ENCODE measurements at regions of chr1 and their contacts with region 1.

Region 1: DNA sequence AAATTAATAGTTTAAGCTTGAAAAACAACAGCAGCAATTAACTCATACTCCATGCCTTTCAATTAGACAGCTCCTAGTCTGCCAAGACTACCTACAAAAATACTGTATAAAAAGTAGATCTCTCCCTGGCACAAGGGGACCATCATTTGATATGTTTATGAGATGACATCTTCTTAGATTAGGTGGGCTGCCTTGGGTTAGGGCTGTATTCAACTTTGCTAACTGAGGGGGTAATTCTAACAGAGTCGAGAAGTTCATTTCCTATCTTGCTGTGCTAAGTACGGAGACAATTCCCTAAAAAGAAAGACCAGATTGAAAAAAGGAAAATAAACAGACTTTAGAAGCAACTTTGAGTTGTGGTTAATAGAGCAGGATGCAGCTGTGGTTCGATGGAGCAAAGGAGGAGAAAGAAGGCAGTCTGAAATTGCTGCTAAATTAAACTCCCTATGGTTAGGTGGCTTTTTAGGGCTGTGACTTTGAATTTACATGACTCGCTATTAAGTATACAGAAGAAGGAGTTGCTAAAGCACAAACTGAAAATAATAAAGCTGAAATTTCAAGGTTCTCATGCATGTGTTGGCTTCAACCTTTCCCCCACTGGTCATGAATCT is 75.4 kb downstream of the CDC7 start:
- DNase-seq: peak; percentile 68
- ATAC-seq: no peak; the same call in 1 of the 2 replicates
- H3K4me3 ChIP-seq: no peak overlapping the region
- H3K27ac ChIP-seq: peak overlapping the region; percentile 73; the same call in 1 of the 2 replicates
- H3K4me1 ChIP-seq: peaks cover 22% of the 10 kb centered on the region
- H3K27me3 ChIP-seq: no peaks in the 10 kb centered on the region
- CTCF ChIP-seq: no peak
- POLR2A ChIP-seq: no peak
- RAD21 ChIP-seq: no peak

Region 2: GRCh38 chr1:91523482-91523881 is 52.5 kb before region 1 on chr1:
- CTCF ChIA-PET with region 1: no interaction called
- POLR2A ChIA-PET with region 1: interaction called, 3 read pairs
- dilution Hi-C with region 1: no loop called
- in situ Hi-C with region 1: no loop called
- intact Hi-C with region 1: loop called (anchors 2 kb)
- DNase-seq: peak; percentile 26
- ATAC-seq: no peak
- H3K4me3 ChIP-seq: no peak overlapping the region
- H3K27ac ChIP-seq: no peak overlapping the region
- H3K4me1 ChIP-seq: no peaks in the 10 kb centered on the region
- H3K27me3 ChIP-seq: no peaks in the 10 kb centered on the region
- CTCF ChIP-seq: no peak
- POLR2A ChIP-seq: no peak
- RAD21 ChIP-seq: no peak

Region 3: DNA sequence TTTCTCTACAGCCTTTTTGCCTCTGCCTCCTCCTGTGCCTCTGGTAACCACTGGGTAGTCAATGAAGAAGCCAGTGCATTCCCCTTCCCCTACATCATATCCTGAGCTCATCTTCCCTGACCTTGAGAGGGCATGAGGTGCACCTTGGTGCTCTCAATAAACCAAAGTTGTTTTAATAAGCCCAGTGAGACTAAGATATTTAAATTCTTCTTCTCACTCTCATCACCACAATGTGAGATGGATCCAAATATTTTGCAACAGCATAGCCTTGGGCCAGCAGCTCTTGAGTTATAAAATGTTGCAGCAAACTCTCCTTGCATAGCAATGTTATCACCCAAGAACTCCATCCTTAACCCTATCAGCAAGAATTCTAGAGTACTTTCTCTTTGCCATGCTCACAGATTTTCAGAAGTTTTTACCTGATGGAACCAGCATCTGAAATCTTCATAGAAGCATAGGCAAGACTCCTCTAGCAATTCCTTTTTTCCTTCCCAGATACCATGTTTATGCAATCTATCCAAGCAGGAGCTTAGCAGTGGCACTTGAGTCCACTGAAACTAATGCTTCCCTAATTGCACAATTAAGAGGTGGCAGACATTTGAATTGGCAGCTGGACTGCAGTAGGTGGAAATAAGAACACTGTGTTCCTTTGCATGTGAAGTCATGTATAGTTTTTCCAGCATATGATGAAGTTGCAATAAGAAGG is 38.6 kb before region 1 on chr1:
- CTCF ChIA-PET with region 1: no interaction called
- POLR2A ChIA-PET with region 1: no interaction called
- dilution Hi-C with region 1: no loop called
- in situ Hi-C with region 1: no loop called
- intact Hi-C with region 1: loop called (anchors 2 kb)
- DNase-seq: peak; percentile 91
- ATAC-seq: peak; percentile 97
- H3K4me3 ChIP-seq: no peak overlapping the region
- H3K27ac ChIP-seq: no peak overlapping the region
- H3K4me1 ChIP-seq: peaks cover 7% of the 10 kb centered on the region
- H3K27me3 ChIP-seq: peaks cover 45% of the 10 kb centered on the region
- CTCF ChIP-seq: no peak
- POLR2A ChIP-seq: no peak
- RAD21 ChIP-seq: 0 out of 2 replicates have a peak, but pooled peaks have one; percentile 3